WTC11 (cell line): ENCODE measurements at regions of chr6 and their contacts with region 1.

Region 1: GRCh38 chr6:34248727-34249551 is at the start of gene SMIM29:
- DNase-seq: peak; percentile 98
- ATAC-seq: peak; percentile 68
- H3K4me3 Mint-ChIP-seq: peak within 1 kb of the TSS; percentile 88
- H3K27ac Mint-ChIP-seq: peak within 1 kb of the TSS; percentile 83
- H3K4me1 Mint-ChIP-seq: peaks cover 29% of the 10 kb centered on the region
- H3K27me3 Mint-ChIP-seq: no peaks in the 10 kb centered on the region
- CTCF ChIP-seq: peak; percentile 65
- total RNA-seq, gene SMIM29: 11.7 to 15.1 TPM (median 14.1 TPM) in 3 replicates

Region 2: DNA sequence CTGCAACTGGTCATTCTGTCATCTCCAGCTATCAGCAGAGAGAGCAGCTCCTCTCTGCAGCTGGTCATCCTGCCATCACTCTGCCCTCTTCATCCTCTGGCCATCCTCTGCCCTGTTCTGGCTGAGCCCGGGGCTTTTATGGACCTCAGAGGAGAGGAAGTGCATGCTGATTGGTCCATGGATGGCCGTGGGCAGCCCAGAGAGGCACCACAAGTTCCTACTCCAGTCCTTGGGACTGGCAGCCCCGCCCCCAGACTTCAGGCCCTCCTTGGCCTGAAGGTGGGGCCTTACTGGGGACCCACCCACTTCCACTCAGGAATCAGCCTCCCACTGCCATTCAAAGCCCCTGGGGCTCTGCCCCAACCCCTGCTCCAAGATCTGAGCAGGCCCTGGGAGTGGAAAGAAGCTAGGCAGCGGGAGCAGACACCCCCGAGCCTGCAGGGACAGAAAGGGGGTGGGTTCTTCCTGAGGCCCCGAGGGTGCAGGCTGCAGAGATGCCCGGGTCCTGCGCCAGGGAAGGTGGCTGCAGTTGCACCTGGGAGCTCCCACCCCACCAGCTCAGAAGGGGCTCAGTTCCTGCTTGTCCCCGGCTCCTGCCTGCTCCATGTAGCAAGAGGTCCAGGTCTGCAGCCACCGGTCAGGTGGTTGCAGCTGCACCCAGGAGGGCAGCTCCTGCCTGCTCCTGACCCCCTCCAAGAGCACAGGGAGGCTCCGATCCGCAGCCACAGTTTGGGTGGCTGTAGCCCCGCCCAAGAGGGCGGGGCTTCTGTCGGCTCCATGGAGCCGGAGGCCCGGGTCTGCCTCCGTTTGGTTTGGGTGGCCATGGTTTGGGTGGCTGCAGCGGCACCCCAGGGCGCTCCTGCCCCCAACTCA is 46.4 kb before region 1 on chr6:
- CTCF ChIA-PET with region 1: interaction called, 17 read pairs
- POLR2A ChIA-PET with region 1: interaction called, 5 read pairs
- DNase-seq: peak; percentile 69
- ATAC-seq: peak; percentile 77
- H3K4me3 Mint-ChIP-seq: peak overlapping the region; percentile 3; the same call in 1 of the 2 replicates
- H3K27ac Mint-ChIP-seq: 0 out of 2 replicates have a peak overlapping the region, but pooled peaks have one; percentile 52
- H3K4me1 Mint-ChIP-seq: peaks cover 51% of the 10 kb centered on the region
- H3K27me3 Mint-ChIP-seq: no peaks in the 10 kb centered on the region; the same call in 1 of the 2 replicates
- CTCF ChIP-seq: no peak

Region 3: GRCh38 chr6:34273242-34273805 is 24.4 kb after region 1 on chr6:
- CTCF ChIA-PET with region 1: interaction called, 14 read pairs
- POLR2A ChIA-PET with region 1: no interaction called
- DNase-seq: no peak
- ATAC-seq: no peak
- H3K4me3 Mint-ChIP-seq: no peak overlapping the region
- H3K27ac Mint-ChIP-seq: no peak overlapping the region
- H3K4me1 Mint-ChIP-seq: peaks cover 5% of the 10 kb centered on the region
- H3K27me3 Mint-ChIP-seq: no peaks in the 10 kb centered on the region
- CTCF ChIP-seq: no peak

Region 4: GRCh38 chr6:34369385-34369784 is 120.4 kb after region 1 on chr6:
- CTCF ChIA-PET with region 1: no interaction called
- POLR2A ChIA-PET with region 1: no interaction called
- DNase-seq: no peak
- ATAC-seq: no peak
- H3K4me3 Mint-ChIP-seq: no peak overlapping the region
- H3K27ac Mint-ChIP-seq: 0 out of 2 replicates have a peak overlapping the region, but pooled peaks have one; percentile 4
- H3K4me1 Mint-ChIP-seq: no peaks in the 10 kb centered on the region
- H3K27me3 Mint-ChIP-seq: no peaks in the 10 kb centered on the region
- CTCF ChIP-seq: no peak

Region 5: GRCh38 chr6:34447910-34448309 is 199.0 kb after region 1 on chr6:
- CTCF ChIA-PET with region 1: interaction called, 11 read pairs
- POLR2A ChIA-PET with region 1: no interaction called
- DNase-seq: peak; percentile 69
- ATAC-seq: peak; percentile 96
- H3K4me3 Mint-ChIP-seq: no peak overlapping the region
- H3K27ac Mint-ChIP-seq: peak overlapping the region; percentile 71; the same call in 1 of the 2 replicates
- H3K4me1 Mint-ChIP-seq: peaks cover 12% of the 10 kb centered on the region
- H3K27me3 Mint-ChIP-seq: no peaks in the 10 kb centered on the region
- CTCF ChIP-seq: no peak

Region 6: DNA sequence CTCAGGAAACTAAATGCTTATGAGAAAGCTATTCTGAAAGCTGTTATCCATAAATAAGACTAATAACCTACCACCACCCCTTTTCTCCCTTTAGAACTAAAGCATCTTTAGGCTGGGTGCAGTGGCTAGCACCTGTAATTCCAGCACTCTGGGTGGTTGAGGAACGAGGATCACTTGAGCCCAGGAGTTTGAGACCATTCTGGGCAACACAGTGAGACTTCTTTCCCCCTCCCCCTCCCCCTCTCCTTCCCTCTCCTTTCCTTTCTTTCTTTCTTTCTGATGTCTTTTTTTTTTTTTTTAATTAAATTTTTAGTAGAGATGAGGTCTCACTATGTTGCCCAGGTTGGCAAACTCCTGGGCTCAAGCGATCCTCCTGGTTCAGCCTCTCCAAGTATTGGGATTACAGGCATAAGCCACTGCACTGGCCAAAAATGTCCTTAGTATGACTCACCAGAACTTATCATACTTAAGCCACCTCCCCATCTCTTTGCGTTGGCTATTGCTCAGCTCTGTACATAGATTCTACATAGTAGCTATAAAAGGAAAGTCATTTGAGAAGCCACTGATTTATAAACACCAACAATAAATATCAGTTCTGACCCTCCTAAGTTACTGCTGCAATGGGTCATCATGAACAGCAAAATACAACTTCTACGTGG is 362.0 kb after region 1 on chr6:
- CTCF ChIA-PET with region 1: interaction called, 11 read pairs
- POLR2A ChIA-PET with region 1: no interaction called
- DNase-seq: no peak
- ATAC-seq: no peak
- H3K4me3 Mint-ChIP-seq: no peak overlapping the region
- H3K27ac Mint-ChIP-seq: peak overlapping the region; percentile 14; the same call in 1 of the 2 replicates
- H3K4me1 Mint-ChIP-seq: peaks cover 2% of the 10 kb centered on the region; the same call in 1 of the 2 replicates
- H3K27me3 Mint-ChIP-seq: no peaks in the 10 kb centered on the region
- CTCF ChIP-seq: no peak